Ovary (tissue), 10 donors: ENCODE measurements at regions of chr19 and their contacts with region 1.

Region 1: DNA sequence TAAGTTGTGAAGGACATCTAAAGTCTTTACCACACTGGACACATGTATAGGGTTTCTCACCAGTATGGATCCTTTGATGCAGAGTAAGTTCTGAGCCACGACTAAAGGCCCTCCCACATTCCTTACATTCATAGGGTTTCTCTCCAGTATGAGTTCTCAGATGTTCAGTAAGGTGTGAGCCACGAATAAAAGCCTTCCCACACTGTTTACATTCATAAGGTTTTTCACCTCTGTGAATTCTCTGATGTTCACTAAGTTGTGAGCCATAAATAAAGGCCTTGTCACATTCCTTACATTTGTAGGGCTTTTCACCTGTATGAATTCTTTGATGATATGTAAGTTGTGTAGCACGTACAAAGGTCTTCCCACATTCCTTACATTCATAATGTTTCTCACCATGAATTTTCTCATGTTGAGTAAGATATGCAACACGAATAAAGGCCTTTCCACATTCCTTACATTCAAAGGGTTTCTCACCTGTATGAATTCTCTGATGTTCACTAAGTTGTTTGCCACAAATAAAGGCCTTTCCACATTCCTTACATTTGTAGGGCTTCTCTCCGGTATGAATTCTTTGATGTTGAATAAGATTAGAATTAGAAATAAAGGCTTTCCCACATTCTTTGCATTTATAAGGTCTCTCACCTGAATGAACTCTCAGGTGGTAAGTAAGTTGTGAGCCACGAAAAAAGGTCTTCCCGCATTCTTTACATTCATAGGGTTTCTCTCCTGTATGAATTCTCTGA is 29.8 kb downstream of the ZNF571 start:
- DNase-seq: no peak
- H3K4me3 ChIP-seq: no peak overlapping the region
- H3K27ac ChIP-seq: no peak overlapping the region
- H3K4me1 ChIP-seq: no peaks in the 10 kb centered on the region
- H3K27me3 ChIP-seq: no peaks in the 10 kb centered on the region
- CTCF ChIP-seq: no peak
- EP300 ChIP-seq: no peak
- POLR2A ChIP-seq: no peak

Region 2: DNA sequence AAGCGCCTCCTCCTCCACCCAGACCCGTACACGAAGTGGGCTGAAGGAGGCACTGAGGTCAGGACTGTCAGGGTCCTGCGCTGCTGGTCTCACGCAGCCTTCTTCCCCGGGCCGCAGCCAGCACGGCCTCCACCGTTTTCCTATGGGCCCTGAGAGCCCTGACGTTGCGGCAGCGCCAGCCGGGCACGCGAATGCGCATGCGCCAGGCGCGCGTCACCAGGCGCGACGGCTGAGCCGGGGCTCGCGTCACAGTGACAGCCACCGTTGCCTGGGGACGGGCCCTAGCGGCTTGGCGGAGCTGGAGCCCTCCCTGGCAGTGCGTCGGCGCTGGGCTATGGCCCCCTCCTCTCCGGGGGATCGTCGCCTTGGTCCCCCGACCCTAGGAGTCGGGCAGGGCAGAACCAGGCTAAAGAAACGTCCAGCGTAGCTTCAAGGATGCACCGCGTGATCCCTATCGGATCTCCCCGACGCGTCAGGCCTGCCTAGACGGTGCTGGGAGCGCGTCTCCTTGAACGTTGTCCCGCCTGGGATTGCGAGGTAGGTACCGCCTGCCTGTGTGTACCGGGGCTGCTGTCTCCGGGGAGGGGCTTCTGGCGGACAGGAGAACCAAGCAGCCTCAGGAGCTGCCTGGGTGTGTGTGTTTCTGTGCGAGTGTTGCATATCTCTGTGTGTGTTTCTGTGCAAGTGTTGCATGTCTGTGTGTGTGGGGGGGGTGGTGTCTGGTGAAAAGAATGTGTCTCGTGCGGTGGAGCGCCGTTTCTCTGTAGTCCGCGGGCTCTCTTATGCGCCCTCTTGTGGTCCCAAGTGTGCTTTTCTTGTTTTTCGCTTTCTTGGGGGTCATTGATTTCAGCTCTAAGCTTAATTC is 13.4 kb before region 1 on chr19:
- intact Hi-C with region 1: loop called in 1 of 4 experiments (anchors 2 kb)
- DNase-seq: no peak
- H3K4me3 ChIP-seq: peak overlapping the region; percentile 5
- H3K27ac ChIP-seq: no peak overlapping the region
- H3K4me1 ChIP-seq: no peaks in the 10 kb centered on the region
- H3K27me3 ChIP-seq: no peaks in the 10 kb centered on the region
- CTCF ChIP-seq: no peak
- EP300 ChIP-seq: no peak
- POLR2A ChIP-seq: no peak